Activated CD4-positive, alpha-beta memory T cell treated with anti-CD3 and anti-CD28 coated beads for 36 hours (primary cell): ENCODE measurements at regions of chr6 and their contacts with region 1.

Region 1: GRCh38 chr6:137903933-137904821 is 37.1 kb downstream of the TNFAIP3 start:
- DNase-seq: peak; percentile 75
- H3K4me3 Mint-ChIP-seq: peak overlapping the region; percentile 71
- H3K27ac Mint-ChIP-seq: peak overlapping the region; percentile 100
- H3K4me1 Mint-ChIP-seq: peaks cover 55% of the 10 kb centered on the region
- H3K27me3 Mint-ChIP-seq: no peaks in the 10 kb centered on the region

Region 2: GRCh38 chr6:137261393-137262160 is 642.6 kb before region 1 on chr6:
- CTCF ChIA-PET with region 1: no interaction called
- POLR2A ChIA-PET with region 1: no interaction called
- intact Hi-C with region 1: no loop called
- DNase-seq: no peak
- H3K4me3 Mint-ChIP-seq: no peak overlapping the region
- H3K27ac Mint-ChIP-seq: no peak overlapping the region
- H3K4me1 Mint-ChIP-seq: peaks cover 8% of the 10 kb centered on the region
- H3K27me3 Mint-ChIP-seq: peaks cover 2% of the 10 kb centered on the region

Region 3: GRCh38 chr6:137829522-137830083 is 74.6 kb before region 1 on chr6:
- CTCF ChIA-PET with region 1: no interaction called
- POLR2A ChIA-PET with region 1: no interaction called
- intact Hi-C with region 1: loop called (anchors 2 kb)
- DNase-seq: no peak
- H3K4me3 Mint-ChIP-seq: peak overlapping the region; percentile 32
- H3K27ac Mint-ChIP-seq: peak overlapping the region; percentile 99
- H3K4me1 Mint-ChIP-seq: peaks cover 68% of the 10 kb centered on the region
- H3K27me3 Mint-ChIP-seq: no peaks in the 10 kb centered on the region

Region 4: GRCh38 chr6:137927777-137928218 is 23.6 kb after region 1 on chr6:
- CTCF ChIA-PET with region 1: no interaction called
- POLR2A ChIA-PET with region 1: no interaction called
- intact Hi-C with region 1: loop called (anchors 1 kb)
- DNase-seq: peak; percentile 88
- H3K4me3 Mint-ChIP-seq: peak overlapping the region; percentile 65
- H3K27ac Mint-ChIP-seq: peak overlapping the region; percentile 90
- H3K4me1 Mint-ChIP-seq: peaks cover 46% of the 10 kb centered on the region
- H3K27me3 Mint-ChIP-seq: no peaks in the 10 kb centered on the region

Region 5: DNA sequence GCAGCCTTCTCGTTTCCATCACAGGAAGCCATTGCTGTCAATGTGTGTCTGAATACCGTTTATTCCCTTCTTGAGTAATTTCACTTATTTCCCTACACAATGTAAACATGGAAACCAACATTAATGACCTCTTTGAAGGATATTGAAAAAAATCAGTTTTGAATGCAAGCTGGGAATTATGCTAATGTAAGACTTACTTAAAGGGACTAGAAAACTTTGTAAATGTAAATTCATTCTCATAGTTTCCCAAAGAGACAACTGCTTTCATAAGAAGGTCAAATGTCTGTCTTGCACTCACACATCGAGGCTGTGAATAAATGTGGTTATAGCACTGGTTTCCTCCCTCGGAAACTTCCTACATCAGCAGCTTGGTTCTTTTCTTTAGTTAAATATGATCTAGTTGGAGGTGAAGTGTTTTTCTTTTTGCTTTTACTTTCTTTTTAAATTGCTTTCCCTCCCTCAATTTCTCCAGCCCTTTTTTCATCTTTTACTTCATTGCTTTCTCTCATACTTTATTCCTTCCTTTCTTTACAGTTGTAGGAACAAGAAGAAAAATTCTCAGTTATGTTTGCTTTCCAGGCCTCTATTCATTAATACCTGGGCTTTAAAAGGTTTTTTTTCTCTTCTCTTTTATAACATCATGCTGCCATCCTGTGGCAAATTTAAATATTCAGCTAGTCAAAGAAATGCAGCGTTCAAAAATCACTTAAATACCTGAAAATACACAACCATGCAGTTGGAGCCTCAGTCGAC is 71.2 kb after region 1 on chr6:
- CTCF ChIA-PET with region 1: no interaction called
- POLR2A ChIA-PET with region 1: interaction called, 4 read pairs
- intact Hi-C with region 1: loop called (anchors 1 kb)
- DNase-seq: peak; percentile 38
- H3K4me3 Mint-ChIP-seq: peak overlapping the region; percentile 64
- H3K27ac Mint-ChIP-seq: peak overlapping the region; percentile 84
- H3K4me1 Mint-ChIP-seq: peaks cover 59% of the 10 kb centered on the region
- H3K27me3 Mint-ChIP-seq: no peaks in the 10 kb centered on the region